IMR-90 (cell line): ENCODE measurements at regions of chr5 and their contacts with region 1.

Region 1: DNA sequence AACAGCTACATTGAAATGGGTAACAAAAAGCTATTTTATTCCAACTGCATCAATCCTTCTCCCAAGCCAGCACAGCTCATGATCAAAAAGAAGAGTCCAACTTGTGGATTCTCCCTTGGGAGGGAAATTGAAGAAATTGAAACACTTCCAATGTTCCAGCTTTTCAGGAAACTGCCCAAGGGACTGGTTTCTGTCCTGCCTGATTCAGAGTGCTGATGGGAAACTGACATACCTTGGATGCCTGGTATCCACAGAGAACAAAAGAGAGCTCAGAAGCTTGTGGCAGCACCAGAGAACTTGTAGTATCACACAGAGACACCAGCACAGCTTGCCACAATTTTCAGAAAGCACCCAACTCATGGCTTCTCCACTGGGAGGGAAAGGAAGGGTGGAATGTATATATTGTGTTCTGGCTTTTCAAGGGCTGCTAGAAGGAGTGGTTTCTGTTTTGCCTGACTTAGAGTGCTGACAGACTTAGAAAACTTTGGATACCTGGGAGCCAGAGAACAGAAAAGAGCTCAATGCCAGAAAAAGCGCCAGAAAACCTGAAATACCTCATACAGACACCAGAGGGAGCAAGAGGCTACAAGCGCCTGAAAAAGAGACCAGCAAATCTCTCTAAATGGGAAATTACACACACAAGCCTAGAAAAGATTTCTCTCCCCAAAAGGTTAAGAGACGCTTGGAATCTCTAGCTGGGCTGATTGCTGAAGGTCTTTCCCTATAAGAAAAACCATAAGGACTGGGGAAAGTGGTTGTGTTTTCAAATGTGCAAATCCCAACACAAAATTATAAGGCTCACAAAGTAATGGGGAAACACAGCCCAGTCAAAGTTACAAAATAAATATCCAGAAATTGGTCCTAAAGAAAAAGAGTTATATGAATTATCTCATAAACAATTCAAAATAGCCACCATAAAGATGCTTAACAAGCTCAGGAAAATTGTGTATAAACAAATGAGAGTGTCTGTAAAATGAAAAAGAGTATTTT is 178.8 kb downstream of the SPOCK1 start:
- DNase-seq: peak; percentile 51
- ATAC-seq: peak; percentile 73; the same call in 1 of the 2 replicates
- H3K4me3 ChIP-seq: no peak overlapping the region
- H3K27ac ChIP-seq: no peak overlapping the region
- H3K4me1 ChIP-seq: no peaks in the 10 kb centered on the region
- H3K27me3 ChIP-seq: peaks cover 8% of the 10 kb centered on the region
- CTCF ChIP-seq: peak; percentile 82
- POLR2A ChIP-seq: no peak
- RAD21 ChIP-seq: peak; percentile 76

Region 2: DNA sequence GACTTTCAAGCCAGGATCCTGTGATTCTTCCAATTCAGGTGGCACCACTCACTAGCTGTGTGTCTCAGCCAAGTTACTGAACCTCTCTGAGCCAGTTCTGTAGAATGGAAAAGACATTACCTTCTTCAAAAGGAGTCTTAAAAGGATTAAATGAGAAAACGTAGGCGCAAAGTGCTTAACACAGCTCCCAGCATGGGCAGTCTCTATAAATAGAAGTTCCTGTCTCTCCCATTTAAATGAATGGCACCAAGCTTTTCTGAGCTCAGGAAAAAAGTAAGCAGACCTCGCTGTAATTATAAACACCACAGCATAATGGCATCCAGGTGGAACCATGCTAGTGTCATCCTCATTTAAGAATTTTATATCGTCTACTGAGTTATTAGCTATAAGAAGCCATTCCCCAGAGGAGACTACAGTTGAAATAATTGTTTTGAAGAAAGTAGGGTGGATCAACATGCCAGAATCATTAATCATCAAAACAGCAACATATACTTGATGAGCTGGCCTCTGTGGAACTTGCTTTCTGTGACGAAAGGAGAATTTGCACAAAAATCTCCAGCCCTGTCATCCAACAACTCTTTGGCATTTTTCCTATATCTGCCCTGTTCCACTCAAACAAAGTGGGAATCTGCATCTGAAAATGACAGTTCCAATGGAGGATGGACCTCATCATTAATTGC is 10.2 kb before region 1 on chr5:
- CTCF ChIA-PET with region 1: interaction called, 11 read pairs
- POLR2A ChIA-PET with region 1: no interaction called
- dilution Hi-C with region 1: no loop called
- in situ Hi-C with region 1: no loop called
- intact Hi-C with region 1: no loop called
- DNase-seq: peak; percentile 93
- ATAC-seq: peak; percentile 87
- H3K4me3 ChIP-seq: no peak overlapping the region
- H3K27ac ChIP-seq: peak overlapping the region; percentile 31; the same call in 1 of the 2 replicates
- H3K4me1 ChIP-seq: peaks cover 10% of the 10 kb centered on the region
- H3K27me3 ChIP-seq: peaks cover 2% of the 10 kb centered on the region; the same call in 1 of the 2 replicates
- CTCF ChIP-seq: no peak
- POLR2A ChIP-seq: no peak
- RAD21 ChIP-seq: no peak